Activated T-helper 1 cell treated with anti-CD3 and anti-CD28 coated beads, Interleukin-12 subunit alpha, Interleukin-12 subunit beta, Interleukin-2, Interleukin-4 antibody, amounts not matched to agents 30 ng/mL and 10 ng/mL and 1 ng/mL, durations not matched to agents 14 hours and 24 hours and 36 hours (primary cell): ENCODE measurements at regions of chr5 and their contacts with region 1.

Region 1: GRCh38 chr5:103224118-103224893 is 34.3 kb upstream of the MACIR start:
- DNase-seq: peak; percentile 24
- H3K4me3 Mint-ChIP-seq: no peak overlapping the region
- H3K27ac Mint-ChIP-seq: no peak overlapping the region
- H3K4me1 Mint-ChIP-seq: no peaks in the 10 kb centered on the region
- H3K27me3 Mint-ChIP-seq: peaks cover 23% of the 10 kb centered on the region

Region 2: DNA sequence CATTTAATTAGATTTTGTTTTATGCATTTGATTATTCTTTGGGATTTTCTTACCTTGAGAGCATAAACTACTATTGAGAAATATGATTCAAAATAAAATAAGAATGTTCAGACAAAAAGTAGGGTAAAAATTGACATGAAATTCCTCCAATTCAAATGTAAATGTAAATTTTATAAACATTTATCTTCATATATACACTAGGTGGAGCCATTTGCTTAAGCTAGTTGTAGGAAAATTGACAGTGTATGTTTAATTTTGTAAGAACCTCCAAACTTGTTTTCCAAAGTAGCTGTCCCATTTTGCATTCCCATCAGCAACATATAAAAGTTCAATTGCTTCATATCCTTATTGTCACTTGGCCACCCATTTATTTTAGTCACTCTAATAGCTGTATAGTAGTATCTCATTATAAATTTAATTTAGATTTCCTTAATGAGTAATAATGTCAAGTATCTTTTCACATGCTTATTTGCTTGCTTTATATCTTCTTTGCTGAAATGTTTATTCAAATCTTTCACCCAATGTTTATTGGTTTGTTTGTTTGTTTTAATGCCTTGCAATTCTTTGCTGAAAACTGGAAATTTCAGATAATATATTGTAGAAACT is 687.9 kb before region 1 on chr5:
- intact Hi-C with region 1: loop called (anchors 1 kb)
- DNase-seq: no peak
- H3K4me3 Mint-ChIP-seq: no peak overlapping the region
- H3K27ac Mint-ChIP-seq: no peak overlapping the region
- H3K4me1 Mint-ChIP-seq: no peaks in the 10 kb centered on the region
- H3K27me3 Mint-ChIP-seq: no peaks in the 10 kb centered on the region

Region 3: DNA sequence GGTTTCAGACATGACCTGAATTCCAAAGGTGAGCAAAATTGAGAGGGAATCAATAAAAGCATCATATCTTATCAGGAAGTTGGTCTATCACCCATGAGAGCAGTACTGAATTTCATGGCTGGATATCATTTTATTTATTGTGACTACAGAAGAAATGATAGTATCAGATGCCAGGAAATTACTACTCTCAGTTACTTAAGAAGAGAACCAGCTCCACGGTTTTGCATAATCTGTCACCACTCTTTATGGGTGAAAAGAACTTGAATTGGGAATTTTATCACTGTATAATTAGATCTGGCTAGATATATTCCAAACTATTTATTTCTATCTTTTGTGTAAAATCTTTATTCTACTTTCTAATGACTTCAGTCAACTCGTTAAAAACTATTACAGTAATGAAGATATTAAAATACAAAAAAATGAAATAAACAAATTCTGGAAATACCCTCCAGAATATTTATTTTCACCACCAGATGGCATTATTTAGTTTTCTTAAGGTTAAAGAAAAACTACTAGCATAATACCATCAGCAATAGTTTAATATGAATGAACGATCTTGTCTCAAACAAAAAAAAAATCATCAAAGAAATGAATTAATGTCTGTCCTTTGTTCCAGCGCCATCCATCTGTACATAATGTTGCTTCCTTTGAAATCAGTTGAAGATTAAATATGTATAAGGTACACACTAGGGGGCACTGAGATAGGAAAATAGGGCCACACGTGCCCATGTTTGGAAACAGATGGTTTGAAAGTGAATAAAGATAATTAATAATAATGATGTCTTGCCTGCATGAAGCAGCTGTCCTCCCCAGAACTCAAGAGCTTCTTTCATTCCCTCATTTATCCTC is 640.8 kb before region 1 on chr5:
- intact Hi-C with region 1: loop called (anchors 1 kb)
- DNase-seq: no peak
- H3K4me3 Mint-ChIP-seq: no peak overlapping the region
- H3K27ac Mint-ChIP-seq: no peak overlapping the region
- H3K4me1 Mint-ChIP-seq: no peaks in the 10 kb centered on the region
- H3K27me3 Mint-ChIP-seq: peaks cover 4% of the 10 kb centered on the region

Region 4: DNA sequence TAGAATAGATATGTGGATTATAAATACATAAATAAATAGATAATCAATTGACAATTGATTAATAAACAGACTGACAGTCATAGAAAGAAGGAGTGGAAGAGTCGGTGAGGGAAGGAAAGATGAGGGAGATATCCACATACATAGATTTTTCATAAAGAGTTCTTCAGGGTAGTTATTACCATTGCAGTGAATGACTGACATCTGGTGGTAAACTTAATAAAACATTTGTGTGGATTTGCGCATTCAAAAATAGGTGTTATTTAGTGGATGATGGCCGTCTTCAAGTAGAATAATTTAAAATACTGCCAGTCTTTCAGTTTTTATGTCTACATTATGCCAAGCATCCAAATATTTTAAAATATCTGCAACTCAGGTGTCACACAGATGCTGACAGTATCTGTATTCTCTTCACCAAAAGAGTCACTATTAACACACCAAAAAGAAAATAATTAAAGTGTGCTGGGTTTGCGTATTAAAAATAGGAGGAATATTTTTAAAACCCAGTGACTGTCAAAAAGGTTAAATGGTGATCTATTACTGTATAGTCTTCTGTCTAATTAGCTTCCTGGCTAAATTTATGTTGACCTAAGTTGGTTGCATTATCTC is 183.1 kb before region 1 on chr5:
- intact Hi-C with region 1: loop called (anchors 10 kb)
- DNase-seq: no peak
- H3K4me3 Mint-ChIP-seq: no peak overlapping the region
- H3K27ac Mint-ChIP-seq: no peak overlapping the region
- H3K4me1 Mint-ChIP-seq: no peaks in the 10 kb centered on the region
- H3K27me3 Mint-ChIP-seq: peaks cover 14% of the 10 kb centered on the region

Region 5: DNA sequence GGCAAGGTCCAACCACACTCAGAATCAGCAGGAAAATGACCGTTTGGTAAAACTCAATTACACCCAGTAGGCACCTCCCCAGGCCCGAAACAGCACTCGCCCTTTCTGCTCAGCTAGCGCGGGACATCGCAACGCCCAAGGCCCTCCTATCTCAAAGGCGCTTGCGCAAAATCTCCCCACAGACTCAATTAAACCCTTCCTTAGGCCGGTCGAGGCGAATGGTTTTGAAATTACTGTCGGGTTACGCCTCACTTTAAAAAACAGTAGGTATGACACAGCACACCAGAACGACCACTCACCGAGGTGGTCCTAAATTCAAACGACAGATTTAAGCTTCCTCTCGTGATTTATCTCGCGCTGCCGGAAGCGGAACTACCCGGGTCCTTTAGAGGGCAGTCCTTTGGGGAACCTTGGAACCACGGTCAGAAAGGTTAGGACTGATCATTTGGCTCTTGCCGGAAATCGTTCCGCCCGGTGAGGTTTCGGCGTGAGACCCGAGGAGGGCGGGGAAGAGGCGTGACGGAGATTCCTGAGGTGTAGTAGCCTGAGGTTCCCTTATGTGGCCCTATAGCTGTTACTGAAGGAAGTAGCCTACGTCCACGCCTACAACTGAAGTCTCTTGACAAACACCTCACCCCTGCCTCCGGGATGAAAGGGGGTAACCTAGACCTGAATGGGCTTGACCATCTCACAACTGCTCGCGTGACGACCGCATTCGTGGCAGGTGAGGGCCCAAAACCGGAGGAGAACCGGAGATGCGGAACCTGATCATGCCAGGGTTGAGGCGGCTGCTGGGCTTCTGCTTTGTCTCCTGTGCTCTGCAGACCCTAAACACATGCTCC is 104.3 kb before region 1 on chr5 and contains the starts of genes GIN1 and PPIP5K2:
- intact Hi-C with region 1: loop called (anchors 1 kb)
- DNase-seq: peak; percentile 96
- H3K4me3 Mint-ChIP-seq: peak within 1 kb of the TSS; percentile 93
- H3K27ac Mint-ChIP-seq: peak within 1 kb of the TSS; percentile 96
- H3K4me1 Mint-ChIP-seq: peaks cover 41% of the 10 kb centered on the region
- H3K27me3 Mint-ChIP-seq: no peaks in the 10 kb centered on the region
- total RNA-seq, gene GIN1: 8.6 and 9.3 TPM in 2 replicates
- total RNA-seq, gene PPIP5K2: 47.6 and 52.7 TPM in 2 replicates

Region 6: GRCh38 chr5:103587185-103587748 is 363.0 kb after region 1 on chr5:
- intact Hi-C with region 1: no loop called
- DNase-seq: no peak
- H3K4me3 Mint-ChIP-seq: no peak overlapping the region
- H3K27ac Mint-ChIP-seq: no peak overlapping the region
- H3K4me1 Mint-ChIP-seq: no peaks in the 10 kb centered on the region
- H3K27me3 Mint-ChIP-seq: peaks cover 2% of the 10 kb centered on the region